MCF 10A (cell line): ENCODE measurements at regions of chr4 and their contacts with region 1.

Region 1: DNA sequence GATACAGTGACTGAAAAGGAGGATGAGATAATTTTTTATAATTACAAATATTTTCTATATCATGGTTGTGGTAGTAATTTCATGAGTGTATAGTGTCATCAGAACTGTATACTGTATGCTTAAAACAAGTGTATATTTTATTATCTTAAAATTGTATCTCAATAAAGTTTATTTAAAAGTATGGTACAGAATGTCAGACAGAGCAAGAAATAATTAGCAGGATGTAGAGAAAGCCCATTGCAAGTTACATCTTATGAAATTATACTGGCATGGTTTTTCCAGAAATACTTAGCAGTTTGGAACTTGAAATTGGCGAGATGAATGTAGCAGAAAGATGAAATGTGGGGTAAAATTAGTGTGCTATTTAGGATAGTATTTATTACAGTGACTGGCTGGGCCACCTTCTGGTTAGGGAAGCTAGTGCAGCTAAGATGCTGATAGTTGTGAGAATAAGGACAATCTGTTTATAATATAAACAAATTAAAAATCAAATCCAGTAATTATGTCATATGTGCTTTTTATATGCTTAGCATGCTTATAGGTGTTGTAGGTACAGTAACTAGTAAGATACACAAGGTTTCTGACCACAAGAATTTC is 74.7 kb downstream of the IL15 start:
- DNase-seq: peak; percentile 49
- H3K4me3 Mint-ChIP-seq: no peak overlapping the region
- H3K27ac Mint-ChIP-seq: no peak overlapping the region
- H3K4me1 Mint-ChIP-seq: peaks cover 20% of the 10 kb centered on the region
- H3K27me3 Mint-ChIP-seq: no peaks in the 10 kb centered on the region
- CTCF ChIP-seq: peak; percentile 42

Region 2: DNA sequence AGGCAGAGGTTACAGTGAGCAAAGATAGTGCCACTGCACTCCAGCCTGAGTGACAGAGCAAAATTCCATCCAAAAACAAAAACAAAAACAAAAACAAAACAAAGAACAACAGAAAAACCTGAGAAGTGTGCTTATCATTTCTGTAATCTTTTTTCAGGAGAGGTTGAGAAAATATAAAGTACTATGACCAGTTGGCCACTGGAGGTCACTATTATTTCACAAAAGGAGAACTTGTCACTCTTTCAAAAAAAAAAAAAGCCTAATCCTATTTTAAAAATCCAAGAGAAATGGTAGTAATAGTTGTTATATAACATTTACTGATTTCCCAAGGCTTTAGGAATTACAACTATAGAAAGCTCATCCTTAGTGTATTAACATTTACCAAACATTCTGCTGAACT is 552.9 kb before region 1 on chr4:
- CTCF ChIA-PET with region 1: no interaction called
- POLR2A ChIA-PET with region 1: no interaction called
- intact Hi-C with region 1: loop called (anchors 5 kb)
- DNase-seq: peak; percentile 62
- H3K4me3 Mint-ChIP-seq: no peak overlapping the region
- H3K27ac Mint-ChIP-seq: no peak overlapping the region
- H3K4me1 Mint-ChIP-seq: peaks cover 6% of the 10 kb centered on the region
- H3K27me3 Mint-ChIP-seq: no peaks in the 10 kb centered on the region
- CTCF ChIP-seq: peak; percentile 69

Region 3: DNA sequence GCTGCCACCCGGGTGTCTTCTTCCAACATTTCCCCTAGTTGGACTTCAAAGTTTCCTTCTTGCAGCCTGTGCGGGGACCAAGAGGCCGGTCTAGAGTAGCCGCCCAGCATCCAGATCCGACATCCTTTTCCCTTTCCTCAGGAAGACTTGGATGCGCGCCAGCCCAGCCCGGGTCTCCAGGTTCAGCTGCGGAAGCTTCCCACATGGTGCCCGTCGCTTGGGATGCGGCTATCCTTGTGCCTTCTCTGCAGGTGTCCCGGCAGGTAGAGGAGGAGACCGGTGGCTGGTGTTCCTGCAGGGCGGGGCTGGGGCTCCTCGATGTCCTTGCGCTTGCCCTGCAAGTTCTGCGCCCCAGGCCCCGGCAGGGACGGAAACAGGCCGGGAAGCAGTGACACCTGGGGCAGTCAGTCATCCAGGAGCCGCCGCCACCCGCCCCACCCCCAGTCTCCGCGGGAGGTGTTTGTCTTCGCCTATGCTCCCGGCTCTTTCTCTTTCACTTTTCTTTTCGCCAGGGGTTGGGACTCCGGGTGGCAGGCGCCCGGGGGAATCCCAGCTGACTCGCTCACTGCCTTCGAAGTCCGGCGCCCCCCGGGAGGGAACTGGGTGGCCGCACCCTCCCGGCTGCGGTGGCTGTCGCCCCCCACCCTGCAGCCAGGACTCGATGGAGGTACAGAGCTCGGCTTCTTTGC is 74.9 kb before region 1 on chr4 and contains the start of gene IL15:
- CTCF ChIA-PET with region 1: no interaction called
- POLR2A ChIA-PET with region 1: interaction called, 3 read pairs
- intact Hi-C with region 1: loop called (anchors 5 kb)
- DNase-seq: peak; percentile 80
- H3K4me3 Mint-ChIP-seq: peak within 1 kb of the TSS; percentile 77
- H3K27ac Mint-ChIP-seq: peak within 1 kb of the TSS; percentile 63
- H3K4me1 Mint-ChIP-seq: peaks cover 11% of the 10 kb centered on the region
- H3K27me3 Mint-ChIP-seq: no peaks in the 10 kb centered on the region
- CTCF ChIP-seq: no peak
- total RNA-seq, gene IL15: 0.51 and 1.3 TPM in 2 replicates